H1 (cell line): ENCODE measurements at regions of chr9 and their contacts with region 1.

Region 1: GRCh38 chr9:114906908-114907571 is 23.4 kb downstream of the TNFSF8 start:
- DNase-seq: peak; percentile 54 to 63
- H3K4me3 ChIP-seq: no peak overlapping the region
- H3K27ac ChIP-seq: no peak overlapping the region
- H3K4me1 ChIP-seq: no peaks in the 10 kb centered on the region
- H3K27me3 ChIP-seq: peaks cover 0 to 2% (median 0%) of the 10 kb centered on the region in 4 experiments; a peak in 1 of 7 replicates
- CTCF ChIP-seq: peak; percentile 58 to 96 (median 92)
- EP300 ChIP-seq: peak in 1 of 2 experiments; percentile 13; a peak in 1 of 3 replicates
- POLR2A ChIP-seq: no peak
- RAD21 ChIP-seq: peak; percentile 97 to 99

Region 2: GRCh38 chr9:114738581-114739316 is 168.3 kb before region 1 on chr9:
- CTCF ChIA-PET with region 1: interaction called, 269 read pairs
- POLR2A ChIA-PET with region 1: no interaction called
- DNase-seq: peak; percentile 46 to 78
- H3K4me3 ChIP-seq: no peak overlapping the region
- H3K27ac ChIP-seq: no peak overlapping the region
- H3K4me1 ChIP-seq: no peaks in the 10 kb centered on the region
- H3K27me3 ChIP-seq: no peaks in the 10 kb centered on the region
- CTCF ChIP-seq: peak; percentile 62 to 92 (median 87)
- EP300 ChIP-seq: no peak
- POLR2A ChIP-seq: no peak
- RAD21 ChIP-seq: peak; percentile 98 to 99

Region 3: DNA sequence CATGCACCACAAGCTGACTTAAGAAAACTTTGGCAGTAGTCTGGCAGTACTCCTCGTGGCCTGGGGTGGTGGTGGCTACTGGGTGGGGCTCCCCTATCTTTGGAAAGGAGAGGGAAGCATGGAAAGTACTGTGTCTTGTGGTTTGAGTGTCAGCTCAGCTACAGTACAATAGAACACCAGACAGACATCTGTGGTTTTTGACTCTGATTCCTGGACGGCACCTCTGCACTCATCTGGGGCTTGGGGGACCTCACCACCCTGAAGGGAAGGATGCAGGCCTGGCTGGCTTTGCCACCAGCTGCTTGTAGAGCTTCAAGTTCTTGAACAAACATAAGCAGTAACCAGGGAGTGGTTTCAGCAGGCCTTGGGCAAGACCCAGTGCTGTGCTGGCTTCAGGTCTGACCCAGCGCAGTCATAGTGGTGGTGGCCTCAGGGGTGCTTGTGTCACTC is 17.2 kb before region 1 on chr9:
- CTCF ChIA-PET with region 1: interaction called, 18 read pairs
- POLR2A ChIA-PET with region 1: no interaction called
- DNase-seq: no peak
- H3K4me3 ChIP-seq: no peak overlapping the region
- H3K27ac ChIP-seq: no peak overlapping the region
- H3K4me1 ChIP-seq: peaks cover 0 to 12% (median 6%) of the 10 kb centered on the region in 4 experiments; a peak in 4 of 7 replicates
- H3K27me3 ChIP-seq: no peaks in the 10 kb centered on the region
- CTCF ChIP-seq: no peak
- EP300 ChIP-seq: no peak
- POLR2A ChIP-seq: no peak
- RAD21 ChIP-seq: no peak

Region 4: DNA sequence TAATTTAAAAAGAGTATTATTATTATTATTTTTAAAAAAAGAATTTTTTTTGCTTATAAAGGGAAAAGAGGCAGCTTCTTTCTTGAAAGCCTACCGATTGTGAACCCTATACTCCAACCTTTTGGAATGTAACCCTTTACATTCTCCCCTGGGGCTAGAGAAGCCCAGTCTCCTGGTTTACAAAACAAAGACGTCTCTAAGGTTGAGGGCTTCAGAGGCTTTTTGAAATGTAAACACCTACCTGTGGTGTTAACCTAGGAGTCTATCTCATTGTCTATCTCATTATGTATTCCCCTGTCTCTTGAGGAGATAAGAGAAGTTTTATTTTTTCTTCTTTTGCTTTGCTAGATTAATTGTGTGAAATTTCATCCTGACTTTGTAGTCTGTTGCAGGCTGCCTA is 18.6 kb after region 1 on chr9:
- CTCF ChIA-PET with region 1: interaction called, 36 read pairs
- POLR2A ChIA-PET with region 1: no interaction called
- DNase-seq: peak in 1 of 2 experiments; percentile 49
- H3K4me3 ChIP-seq: no peak overlapping the region
- H3K27ac ChIP-seq: no peak overlapping the region
- H3K4me1 ChIP-seq: peaks cover 0 to 4% (median 0%) of the 10 kb centered on the region in 4 experiments; a peak in 2 of 7 replicates
- H3K27me3 ChIP-seq: peaks cover 68 to 94% (median 92%) of the 10 kb centered on the region in 4 experiments
- CTCF ChIP-seq: no peak
- EP300 ChIP-seq: peak in 1 of 2 experiments; percentile 35; a peak in 1 of 3 replicates
- POLR2A ChIP-seq: no peak
- RAD21 ChIP-seq: no peak

Region 5: GRCh38 chr9:115013998-115014397 is 107.0 kb after region 1 on chr9:
- CTCF ChIA-PET with region 1: interaction called, 234 read pairs
- POLR2A ChIA-PET with region 1: no interaction called
- DNase-seq: peak; percentile 27 to 75
- H3K4me3 ChIP-seq: no peak overlapping the region
- H3K27ac ChIP-seq: no peak overlapping the region
- H3K4me1 ChIP-seq: no peaks in the 10 kb centered on the region
- H3K27me3 ChIP-seq: no peaks in the 10 kb centered on the region; a peak in 1 of 7 replicates
- CTCF ChIP-seq: peak; percentile 66 to 90 (median 80)
- EP300 ChIP-seq: no peak
- POLR2A ChIP-seq: no peak
- RAD21 ChIP-seq: peak; percentile 97 to 98